BJ (cell line): ENCODE measurements at regions of chr2 and their contacts with region 1.

Region 1: DNA sequence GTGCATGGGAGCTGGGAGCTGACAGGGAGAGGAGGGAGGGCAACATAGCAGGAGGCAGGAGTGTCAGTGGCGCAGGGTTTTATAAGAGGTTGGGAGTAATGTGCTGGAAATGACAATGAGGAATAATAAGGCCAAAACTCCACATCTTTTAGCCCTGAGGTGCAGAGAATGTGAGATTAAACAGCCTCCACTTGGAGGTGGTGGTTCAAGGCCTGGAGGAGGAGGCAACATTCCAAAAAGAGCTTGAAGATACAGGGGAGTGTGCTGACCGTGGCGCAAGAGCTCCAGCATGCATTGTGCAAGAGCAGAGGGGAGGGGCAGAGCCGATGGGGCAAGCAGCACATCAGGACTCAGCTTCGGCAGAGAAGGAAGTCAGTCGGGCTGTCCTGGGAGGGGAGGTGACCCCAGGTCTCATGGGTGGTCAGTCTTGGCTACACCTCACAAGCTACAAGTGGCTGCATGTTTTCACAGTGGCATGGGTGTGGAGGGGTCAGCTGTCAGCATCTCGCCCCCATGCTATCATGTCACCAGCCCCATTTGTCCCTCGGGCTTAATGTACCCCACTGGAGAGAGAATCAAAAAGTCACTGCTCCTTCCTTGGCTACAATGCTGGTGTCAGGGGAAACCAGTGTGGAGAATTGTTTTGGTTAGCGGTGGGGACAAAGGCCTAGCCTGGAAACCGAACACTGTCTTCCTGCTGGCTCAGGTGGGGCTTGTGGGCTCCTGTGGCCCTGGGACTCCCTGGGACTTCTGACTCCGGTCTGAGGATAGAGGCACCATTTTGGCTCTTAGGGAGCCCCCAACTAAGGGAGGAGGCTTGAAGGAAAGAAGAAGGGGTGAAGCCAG is 208.0 kb downstream of the ZFP36L2 start:
- DNase-seq: no peak
- H3K4me3 ChIP-seq: no peak overlapping the region
- H3K27me3 ChIP-seq: no peaks in the 10 kb centered on the region
- CTCF ChIP-seq: no peak

Region 2: GRCh38 chr2:43133708-43134570 is 115.5 kb after region 1 on chr2:
- CTCF ChIA-PET with region 1: no interaction called
- POLR2A ChIA-PET with region 1: no interaction called
- DNase-seq: no peak
- H3K4me3 ChIP-seq: no peak overlapping the region
- H3K27me3 ChIP-seq: no peaks in the 10 kb centered on the region
- CTCF ChIP-seq: no peak

Region 3: GRCh38 chr2:43152741-43153647 is 134.6 kb after region 1 on chr2:
- CTCF ChIA-PET with region 1: no interaction called
- POLR2A ChIA-PET with region 1: interaction called, 14 read pairs
- DNase-seq: no peak
- H3K4me3 ChIP-seq: no peak overlapping the region
- H3K27me3 ChIP-seq: no peaks in the 10 kb centered on the region; the same call in 1 of the 2 replicates
- CTCF ChIP-seq: no peak